Sigmoid colon (tissue), 7 donors: ENCODE measurements at regions of chr5 and their contacts with region 1.

Region 1: DNA sequence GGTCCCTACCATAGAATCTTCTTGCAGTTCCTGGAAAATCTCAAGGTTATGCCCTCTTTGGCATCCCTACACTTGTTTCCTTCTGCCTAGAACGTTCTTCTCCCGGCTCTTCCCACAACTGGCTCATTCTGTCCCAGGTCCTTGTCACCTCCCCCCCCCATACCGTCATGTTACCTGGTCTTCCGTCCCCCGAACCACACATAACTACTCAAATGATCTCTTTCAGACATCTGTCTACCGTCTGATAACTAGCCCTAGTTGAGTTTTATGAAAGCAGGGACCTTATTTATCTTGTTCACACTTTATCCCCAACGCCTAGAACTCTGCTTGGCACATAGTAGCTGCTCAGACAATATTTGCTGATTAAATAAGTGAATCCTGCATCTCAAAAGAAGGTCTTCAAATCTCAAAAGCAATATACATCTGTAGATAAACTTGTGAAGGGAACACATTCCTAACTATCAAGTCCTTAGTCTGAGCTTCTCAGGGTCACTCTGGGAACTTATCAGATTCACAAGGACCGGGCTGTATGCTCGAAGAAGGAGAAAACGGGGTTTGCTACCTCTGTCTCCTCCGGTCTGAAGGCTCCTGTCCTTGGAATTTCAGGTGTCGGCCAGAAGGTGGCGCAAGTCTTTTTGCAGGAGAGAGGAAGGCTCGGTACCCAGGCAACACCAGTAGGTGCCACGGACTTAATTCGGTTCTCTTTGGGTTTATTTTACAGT is 30.0 kb downstream of the LCP2 start:
- DNase-seq: peak; percentile 92
- H3K4me3 ChIP-seq: peak overlapping the region in 3 of 4 donors; percentile 5 to 24 (median 22)
- H3K27ac ChIP-seq: peak overlapping the region; percentile 38 to 62 (median 49)
- H3K4me1 ChIP-seq: peaks cover 0 to 14% (median 14%) of the 10 kb centered on the region in 4 donors
- H3K27me3 ChIP-seq: peaks cover 0 to 8% (median 0%) of the 10 kb centered on the region in 3 donors
- CTCF ChIP-seq: peak; percentile 66 to 85 (median 77)
- EP300 ChIP-seq: no peak
- POLR2A ChIP-seq: no peak

Region 2: DNA sequence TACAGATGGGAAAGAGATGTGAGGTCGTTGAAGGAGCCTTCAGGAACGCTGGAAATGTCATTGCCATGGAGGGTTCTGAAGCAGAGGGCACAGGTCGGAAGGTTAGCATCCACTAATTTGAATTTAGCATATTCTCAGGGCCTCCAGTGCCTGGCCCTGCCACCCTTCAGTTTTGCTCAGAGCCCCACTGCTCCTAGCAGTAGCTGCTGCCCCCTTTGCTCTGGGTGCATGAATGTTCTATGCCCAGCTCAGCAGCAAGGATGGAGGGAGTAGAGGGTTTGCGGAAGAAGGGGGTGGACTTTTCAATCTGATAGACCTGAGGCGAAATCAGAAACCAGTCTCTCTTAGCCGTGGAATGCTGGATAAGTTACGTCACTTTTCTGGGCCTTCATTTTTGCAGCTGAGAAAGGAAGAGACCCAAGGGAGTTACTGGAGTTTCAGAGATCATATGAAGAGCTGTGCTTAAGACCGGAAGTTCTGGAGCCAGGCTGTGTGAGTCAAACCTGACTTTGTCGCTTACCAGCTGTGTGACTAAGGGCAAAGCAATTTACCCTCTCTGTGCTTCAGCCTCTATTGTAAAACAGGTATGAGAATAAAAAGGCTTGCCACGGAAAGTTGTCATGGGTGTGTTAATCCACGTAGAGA is 1555.2 kb before region 1 on chr5:
- intact Hi-C with region 1: no loop called
- DNase-seq: no peak
- H3K4me3 ChIP-seq: no peak overlapping the region
- H3K27ac ChIP-seq: no peak overlapping the region
- H3K4me1 ChIP-seq: no peaks in the 10 kb centered on the region
- H3K27me3 ChIP-seq: no peaks in the 10 kb centered on the region
- CTCF ChIP-seq: no peak
- EP300 ChIP-seq: no peak
- POLR2A ChIP-seq: no peak

Region 3: DNA sequence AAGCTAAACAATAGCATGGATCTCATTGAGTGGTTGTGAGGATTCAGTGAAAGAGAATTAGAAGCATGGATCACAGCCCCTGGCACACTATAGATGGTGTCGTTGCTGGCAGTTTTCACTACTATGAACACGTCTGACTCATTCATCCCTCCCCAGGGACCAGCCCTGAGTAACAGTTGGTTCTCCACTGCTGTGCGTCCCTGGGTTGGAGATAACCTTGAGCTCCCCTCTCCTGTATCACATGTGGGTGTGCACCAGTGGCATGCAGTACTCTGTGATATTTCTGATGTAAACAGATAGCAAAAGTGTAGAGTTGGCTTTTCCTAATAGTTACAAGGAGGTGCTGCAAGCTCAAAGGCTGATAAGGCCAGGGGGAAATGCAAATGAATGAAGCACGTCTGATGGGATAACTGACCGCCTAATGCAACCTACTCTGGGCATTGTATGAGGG is 38.8 kb after region 1 on chr5:
- intact Hi-C with region 1: loop called (anchors 5 kb)
- DNase-seq: peak; percentile 86
- H3K4me3 ChIP-seq: no peak overlapping the region
- H3K27ac ChIP-seq: peak overlapping the region; percentile 55 to 72 (median 60)
- H3K4me1 ChIP-seq: peaks cover 0 to 39% (median 24%) of the 10 kb centered on the region in 4 donors
- H3K27me3 ChIP-seq: no peaks in the 10 kb centered on the region
- CTCF ChIP-seq: no peak
- EP300 ChIP-seq: no peak
- POLR2A ChIP-seq: no peak

Region 4: GRCh38 chr5:170348137-170348633 is 80.6 kb after region 1 on chr5:
- intact Hi-C with region 1: loop called (anchors 5 kb)
- DNase-seq: peak; percentile 55
- H3K4me3 ChIP-seq: no peak overlapping the region
- H3K27ac ChIP-seq: no peak overlapping the region
- H3K4me1 ChIP-seq: peaks cover 0 to 9% (median 8%) of the 10 kb centered on the region in 4 donors
- H3K27me3 ChIP-seq: no peaks in the 10 kb centered on the region
- CTCF ChIP-seq: no peak
- EP300 ChIP-seq: no peak
- POLR2A ChIP-seq: no peak